Right cardiac atrium (tissue), 5 donors: ENCODE measurements at regions of chr5 and their contacts with region 1.

Region 1: DNA sequence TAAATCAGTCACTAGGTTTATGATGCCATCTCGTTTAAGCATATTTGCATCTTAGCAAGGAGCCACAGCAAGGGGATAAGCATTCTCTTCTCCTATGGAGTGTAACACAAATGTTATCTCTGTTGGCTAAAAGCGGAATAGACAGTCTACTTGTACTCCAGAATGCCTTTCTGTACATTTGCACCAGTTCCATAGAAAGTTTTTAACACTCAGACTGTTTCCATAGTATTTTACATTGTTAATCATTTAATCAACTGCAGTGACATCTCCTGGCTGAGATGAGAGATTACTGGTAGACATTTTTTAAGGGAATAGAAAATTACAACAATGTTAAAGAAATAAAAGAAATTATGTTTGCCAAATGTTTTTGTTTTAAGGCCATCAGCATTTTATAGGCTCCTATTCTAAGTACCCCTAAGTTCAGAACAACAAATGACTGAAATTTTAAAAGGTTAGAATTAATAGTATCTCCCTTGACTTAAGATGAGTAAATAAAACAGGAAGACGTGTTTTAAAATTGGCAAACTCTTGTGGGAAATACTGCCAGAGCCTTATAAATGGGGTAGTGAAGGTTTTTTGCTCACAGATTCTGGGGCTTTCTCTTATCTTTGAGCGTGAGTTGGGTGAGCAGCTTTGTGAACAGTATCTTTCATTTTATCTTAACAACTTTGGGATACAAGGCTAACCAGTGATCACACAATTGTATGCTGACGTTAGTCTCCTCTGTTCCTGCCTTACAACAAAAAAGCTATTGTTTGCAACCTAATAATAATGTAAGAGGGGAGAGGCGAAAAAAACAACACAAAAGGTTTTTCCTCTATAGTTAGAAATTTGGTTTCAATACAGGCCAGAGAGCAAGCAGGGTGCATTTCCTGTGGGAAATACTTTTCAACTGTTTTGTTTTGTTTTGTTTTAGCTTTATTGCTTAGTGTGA is 294.3 kb downstream of the FBXL7 start:
- DNase-seq: no peak
- ATAC-seq: no peak
- H3K4me3 ChIP-seq: no peak overlapping the region
- H3K27ac ChIP-seq: no peak overlapping the region
- H3K4me1 ChIP-seq: peaks cover 9% of the 10 kb centered on the region
- H3K27me3 ChIP-seq: no peaks in the 10 kb centered on the region

Region 2: DNA sequence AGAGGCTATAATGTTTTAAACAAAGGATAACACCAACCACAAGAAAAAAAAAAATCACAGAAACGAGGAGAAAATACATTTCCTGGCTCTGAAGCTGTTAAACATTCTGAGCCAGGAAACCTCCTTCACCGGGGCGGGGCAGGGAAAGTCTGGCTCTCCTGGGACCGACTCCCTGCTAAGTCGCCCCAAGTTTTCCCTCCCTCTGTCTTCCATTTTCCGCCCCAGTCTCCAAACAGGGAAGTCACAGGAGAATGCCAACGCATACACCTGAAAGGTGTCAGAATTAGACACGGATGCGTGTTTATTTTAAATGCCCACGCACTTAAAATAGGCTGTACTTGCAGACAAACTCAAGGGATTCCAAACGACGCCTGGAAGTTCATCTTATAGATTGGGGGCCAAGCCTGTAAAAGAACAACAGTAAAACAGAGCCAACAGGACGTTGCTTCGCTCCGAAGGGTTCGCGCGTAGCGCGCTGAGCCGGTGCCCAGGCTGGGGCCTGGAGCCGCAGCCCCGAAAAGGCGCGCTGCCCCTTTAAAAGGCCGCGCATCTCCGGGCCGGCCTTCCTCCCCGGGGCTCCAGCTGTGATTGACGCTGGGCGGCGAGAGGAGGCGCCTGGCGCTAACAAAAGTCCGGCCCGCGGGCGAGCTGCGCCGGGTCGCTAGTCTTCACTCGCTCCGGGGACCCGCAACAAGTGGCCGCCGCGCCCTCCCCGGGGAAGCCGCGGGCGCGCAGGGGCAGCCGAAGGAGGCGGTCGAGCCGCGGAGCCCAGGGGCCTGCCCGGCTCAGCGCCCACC is 294.6 kb before region 1 on chr5 and contains the start of gene FBXL7:
- intact Hi-C with region 1: loop called in 1 of 4 experiments (anchors 10 kb)
- DNase-seq: peak; percentile 89 to 94 (median 94)
- ATAC-seq: peak; percentile 91 to 93
- H3K4me3 ChIP-seq: peak within 1 kb of the TSS; percentile 73
- H3K27ac ChIP-seq: peak within 1 kb of the TSS; percentile 76
- H3K4me1 ChIP-seq: peaks cover 1% of the 10 kb centered on the region
- H3K27me3 ChIP-seq: no peaks in the 10 kb centered on the region
- total RNA-seq, gene FBXL7: 16.1 to 22.2 (median 18.4) TPM